ENCODE measurements at regions of chr3 and their contacts with region 1.

Region 1: DNA sequence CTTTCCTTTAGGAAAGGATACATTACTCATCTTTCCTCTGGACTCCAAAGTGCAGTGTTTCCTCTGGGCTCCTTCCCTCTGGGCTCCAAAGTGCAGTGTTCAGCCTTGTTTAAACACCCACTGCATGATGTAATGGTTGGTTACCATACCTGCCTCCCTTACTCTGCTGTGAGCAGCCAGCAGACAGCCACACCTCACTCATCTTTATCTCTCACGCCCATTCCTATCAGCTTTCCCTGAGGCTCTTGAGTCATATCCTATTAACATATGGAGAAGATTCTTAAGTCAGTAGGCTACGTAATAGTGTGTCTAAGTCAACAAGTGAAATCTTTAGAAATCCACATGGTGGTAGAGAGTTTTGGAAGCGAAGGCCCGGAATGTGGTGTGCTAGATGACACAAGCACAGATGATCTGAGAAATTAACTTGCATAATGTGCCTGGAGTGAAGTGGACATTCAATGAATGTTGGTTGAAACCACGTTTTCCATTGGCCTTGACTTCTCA is 97.2 kb upstream of the CTNNB1 start:
- DNase-seq: peak; percentile 89
- H3K4me3 ChIP-seq: no peak overlapping the region
- H3K27ac ChIP-seq: peak overlapping the region; percentile 3
- H3K4me1 ChIP-seq: peaks cover 16% of the 10 kb centered on the region
- H3K27me3 ChIP-seq: no peaks in the 10 kb centered on the region
- CTCF ChIP-seq: no peak

Region 2: DNA sequence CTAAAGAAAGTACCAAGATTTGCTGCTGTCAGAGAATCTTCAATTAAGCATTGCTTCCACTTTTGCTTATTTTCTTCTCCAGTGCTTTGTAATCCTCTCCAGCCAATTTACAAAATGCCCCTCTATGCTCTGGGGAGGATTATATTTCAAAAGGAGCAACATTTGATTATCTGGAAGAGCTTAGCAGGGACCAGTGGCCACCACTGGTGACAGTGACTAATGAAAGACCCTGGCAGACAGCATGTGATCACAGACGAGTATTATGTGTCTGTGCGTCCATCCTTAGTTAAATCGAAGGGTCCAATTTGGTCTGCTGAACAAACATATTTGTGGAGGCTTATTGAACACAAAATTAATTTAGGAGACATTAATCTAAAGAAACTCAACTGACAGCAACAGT is 424.8 kb before region 1 on chr3:
- CTCF ChIA-PET with region 1: no interaction called
- dilution Hi-C with region 1: no loop called
- in situ Hi-C with region 1: no loop called
- intact Hi-C with region 1: no loop called
- DNase-seq: no peak
- H3K4me3 ChIP-seq: no peak overlapping the region
- H3K27ac ChIP-seq: no peak overlapping the region
- H3K4me1 ChIP-seq: peaks cover 20% of the 10 kb centered on the region
- H3K27me3 ChIP-seq: no peaks in the 10 kb centered on the region
- CTCF ChIP-seq: no peak

Region 3: GRCh38 chr3:40961104-40961857 is 140.8 kb before region 1 on chr3:
- CTCF ChIA-PET with region 1: no interaction called
- dilution Hi-C with region 1: no loop called
- in situ Hi-C with region 1: no loop called
- intact Hi-C with region 1: no loop called
- DNase-seq: no peak
- H3K4me3 ChIP-seq: no peak overlapping the region
- H3K27ac ChIP-seq: no peak overlapping the region
- H3K4me1 ChIP-seq: no peaks in the 10 kb centered on the region
- H3K27me3 ChIP-seq: no peaks in the 10 kb centered on the region
- CTCF ChIP-seq: no peak

Region 4: DNA sequence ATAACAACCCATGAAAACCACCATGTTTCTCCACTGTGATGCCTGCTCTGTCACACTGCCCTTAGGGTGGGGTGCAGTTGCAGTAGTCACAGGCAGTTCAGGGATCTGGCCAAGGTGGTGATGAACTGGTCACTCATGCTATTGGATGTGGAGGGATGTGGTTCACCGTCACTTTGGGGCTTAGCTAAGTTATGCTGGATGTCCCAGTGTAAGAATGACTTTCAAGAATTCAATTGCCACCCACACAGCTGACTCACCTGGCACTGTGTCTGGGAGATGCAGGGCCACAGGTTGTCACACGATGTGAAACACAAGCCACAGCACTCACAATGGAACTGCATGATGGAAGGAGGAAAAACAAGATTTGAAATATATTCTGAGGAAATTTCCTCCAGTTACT is 48.9 kb before region 1 on chr3:
- CTCF ChIA-PET with region 1: no interaction called
- dilution Hi-C with region 1: loop called (anchors 5 kb)
- in situ Hi-C with region 1: no loop called
- intact Hi-C with region 1: no loop called
- DNase-seq: peak; percentile 40
- H3K4me3 ChIP-seq: no peak overlapping the region
- H3K27ac ChIP-seq: no peak overlapping the region
- H3K4me1 ChIP-seq: peaks cover 9% of the 10 kb centered on the region
- H3K27me3 ChIP-seq: no peaks in the 10 kb centered on the region
- CTCF ChIP-seq: no peak

Region 5: GRCh38 chr3:41117398-41117870 is 15.3 kb after region 1 on chr3:
- CTCF ChIA-PET with region 1: no interaction called
- dilution Hi-C with region 1: no loop called
- in situ Hi-C with region 1: no loop called
- intact Hi-C with region 1: loop called (anchors 1 kb)
- DNase-seq: peak; percentile 98
- H3K4me3 ChIP-seq: no peak overlapping the region
- H3K27ac ChIP-seq: peak overlapping the region; percentile 74
- H3K4me1 ChIP-seq: peaks cover 16% of the 10 kb centered on the region
- H3K27me3 ChIP-seq: no peaks in the 10 kb centered on the region
- CTCF ChIP-seq: no peak

Region 6: DNA sequence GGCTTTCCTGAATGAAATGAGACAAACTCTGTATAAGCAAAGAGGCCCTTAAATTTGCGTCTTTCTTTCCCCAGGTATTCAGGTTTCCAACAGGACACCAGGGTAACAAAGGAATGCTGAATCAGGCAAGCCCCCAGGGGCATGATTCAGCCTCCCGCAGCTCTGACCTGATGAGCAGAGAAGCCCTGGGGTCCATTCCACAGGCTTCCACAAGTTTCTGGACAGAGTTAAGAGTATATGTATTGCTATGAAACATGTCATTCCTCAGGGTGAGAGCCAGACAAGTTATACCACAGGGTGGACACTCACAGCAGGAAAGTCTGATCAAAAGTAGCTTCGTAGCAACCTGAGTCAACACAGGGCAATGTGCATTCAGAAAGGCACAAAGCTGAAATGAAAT is 29.1 kb after region 1 on chr3:
- CTCF ChIA-PET with region 1: no interaction called
- dilution Hi-C with region 1: no loop called
- in situ Hi-C with region 1: no loop called
- intact Hi-C with region 1: loop called (anchors 1 kb)
- DNase-seq: peak; percentile 99
- H3K4me3 ChIP-seq: no peak overlapping the region
- H3K27ac ChIP-seq: peak overlapping the region; percentile 89
- H3K4me1 ChIP-seq: peaks cover 17% of the 10 kb centered on the region
- H3K27me3 ChIP-seq: no peaks in the 10 kb centered on the region
- CTCF ChIP-seq: peak in 1 of 2 donors; percentile 16

Region 7: DNA sequence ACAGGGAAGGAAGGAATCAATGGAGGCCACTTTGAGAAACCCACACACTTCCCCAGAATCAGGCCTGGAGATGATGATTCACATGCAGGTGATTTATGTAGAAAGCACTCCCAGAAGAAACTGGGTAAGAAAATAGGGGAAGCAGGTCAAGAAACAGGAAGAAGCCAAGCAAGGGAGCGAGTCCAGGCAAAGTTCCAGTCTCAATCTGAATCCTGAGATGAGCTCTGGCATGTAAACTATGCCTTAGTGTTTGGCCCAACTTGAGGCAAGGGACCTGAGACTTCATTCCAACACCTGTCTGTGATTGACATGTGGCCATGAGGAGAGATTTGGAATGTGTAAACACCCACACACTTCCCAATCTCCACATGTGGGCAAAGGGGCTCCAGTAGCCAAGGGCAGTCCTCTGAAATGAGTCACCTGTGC is 35.6 kb after region 1 on chr3:
- CTCF ChIA-PET with region 1: no interaction called
- dilution Hi-C with region 1: no loop called
- in situ Hi-C with region 1: no loop called
- intact Hi-C with region 1: loop called (anchors 2 kb)
- DNase-seq: peak; percentile 96
- H3K4me3 ChIP-seq: no peak overlapping the region
- H3K27ac ChIP-seq: peak overlapping the region; percentile 92
- H3K4me1 ChIP-seq: peaks cover 26% of the 10 kb centered on the region
- H3K27me3 ChIP-seq: no peaks in the 10 kb centered on the region
- CTCF ChIP-seq: no peak

Measured in mammary epithelial cell (primary cell).